ENCODE measurements at regions of chr19 and their contacts with region 1.

Region 1: DNA sequence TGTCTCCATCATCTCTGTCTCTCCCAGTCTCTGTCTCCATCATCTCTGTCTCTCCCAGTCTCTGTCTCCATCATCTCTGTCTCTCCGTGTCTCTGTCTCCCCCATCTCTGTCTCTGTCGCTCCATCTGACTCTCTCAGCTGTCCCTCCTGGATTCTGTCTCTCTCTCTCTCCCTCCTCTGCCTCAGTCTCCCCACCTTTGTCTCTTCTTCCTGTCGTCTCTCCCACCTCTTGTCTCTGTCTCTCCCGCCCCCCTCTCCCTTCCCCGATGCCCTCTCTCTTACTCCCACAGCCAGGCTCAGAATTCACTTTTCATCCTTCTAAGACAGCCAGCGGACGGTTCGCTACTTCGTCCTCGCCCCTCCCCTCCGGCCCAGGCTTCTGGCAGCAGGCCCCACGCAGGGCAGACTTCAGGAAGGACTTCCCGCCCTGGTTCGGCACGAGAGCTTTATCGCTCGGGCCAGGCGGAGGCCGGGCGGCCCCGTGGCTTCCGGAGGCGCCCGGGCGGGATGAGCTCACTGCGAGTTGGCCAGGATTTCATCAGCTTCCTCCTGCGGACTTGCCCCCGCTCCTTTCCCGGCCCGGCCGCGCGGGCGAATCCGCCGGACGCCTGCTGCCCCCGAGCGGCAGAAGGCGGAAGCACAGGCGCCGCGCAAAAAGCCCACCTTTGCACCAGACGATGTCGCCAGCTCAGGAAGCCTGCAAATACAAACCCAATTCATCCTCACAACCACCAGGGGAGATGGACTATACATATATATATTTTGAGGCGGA is 12.4 kb upstream of the CCDC9 start:
- DNase-seq: peak; percentile 80 to 88
- ATAC-seq: peak; percentile 88 to 92
- H3K4me3 ChIP-seq: peak overlapping the region; percentile 44 to 60 (median 51)
- H3K27ac ChIP-seq: peak overlapping the region; percentile 56 to 71 (median 68)
- H3K4me1 ChIP-seq: peaks cover 12 to 31% of the 10 kb centered on the region in 2 donors
- H3K27me3 ChIP-seq: peaks cover 30 to 36% (median 34%) of the 10 kb centered on the region in 3 donors
- CTCF ChIP-seq: peak; percentile 98 to 99 (median 99)
- POLR2A ChIP-seq: peak in 1 of 2 donors; percentile 39

Region 2: DNA sequence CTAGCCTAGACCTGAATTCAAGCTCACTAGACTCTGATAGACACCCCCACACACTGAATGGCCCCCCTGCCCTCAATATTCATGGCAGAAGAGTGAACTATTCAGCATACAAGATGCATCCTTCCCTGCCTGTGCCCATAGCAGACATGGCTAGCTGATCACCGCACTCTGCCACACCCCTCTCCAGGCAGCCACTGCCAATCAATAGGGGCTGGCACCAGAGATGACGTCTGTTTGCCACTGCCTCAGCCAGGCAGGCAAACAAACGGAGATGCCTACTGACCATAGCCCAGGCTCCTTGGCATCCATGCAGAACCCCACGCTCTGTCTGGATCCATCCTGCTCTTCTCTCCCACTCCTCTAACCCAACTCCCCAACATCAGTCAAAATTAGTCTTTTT is 238.1 kb before region 1 on chr19:
- in situ Hi-C with region 1: no loop called
- intact Hi-C with region 1: no loop called
- DNase-seq: no peak
- ATAC-seq: no peak
- H3K4me3 ChIP-seq: no peak overlapping the region
- H3K27ac ChIP-seq: no peak overlapping the region
- H3K4me1 ChIP-seq: peaks cover 4 to 6% of the 10 kb centered on the region in 2 donors
- H3K27me3 ChIP-seq: peaks cover 0 to 9% (median 7%) of the 10 kb centered on the region in 3 donors
- CTCF ChIP-seq: no peak
- POLR2A ChIP-seq: no peak

Region 3: GRCh38 chr19:47130591-47131227 is 113.3 kb before region 1 on chr19 and contains the start of gene SAE1:
- in situ Hi-C with region 1: loop called in 1 of 4 experiments (anchors 10 kb)
- intact Hi-C with region 1: loop called (anchors 5 kb)
- DNase-seq: peak; percentile 86 to 95
- ATAC-seq: peak; percentile 93 to 94
- H3K4me3 ChIP-seq: peak within 1 kb of the TSS; percentile 65 to 86 (median 84)
- H3K27ac ChIP-seq: peak within 1 kb of the TSS; percentile 80 to 88 (median 86)
- H3K4me1 ChIP-seq: peaks cover 0 to 4% of the 10 kb centered on the region in 2 donors
- H3K27me3 ChIP-seq: no peaks in the 10 kb centered on the region
- CTCF ChIP-seq: peak in 4 of 5 experiments; percentile 43 to 71 (median 60)
- POLR2A ChIP-seq: peak; percentile 50 to 65
- total RNA-seq, gene SAE1: 29.7 to 74.6 (median 46.4) TPM

Region 4: GRCh38 chr19:47143322-47144073 is 100.5 kb before region 1 on chr19:
- in situ Hi-C with region 1: loop called in 3 of 4 experiments (anchors 10 kb)
- intact Hi-C with region 1: no loop called
- DNase-seq: peak; percentile 7 to 20
- ATAC-seq: peak in 1 of 2 donors; percentile 61
- H3K4me3 ChIP-seq: no peak overlapping the region
- H3K27ac ChIP-seq: peak overlapping the region in 1 of 4 donors; percentile 5
- H3K4me1 ChIP-seq: peaks cover 8 to 10% of the 10 kb centered on the region in 2 donors
- H3K27me3 ChIP-seq: no peaks in the 10 kb centered on the region
- CTCF ChIP-seq: no peak
- POLR2A ChIP-seq: no peak

Region 5: DNA sequence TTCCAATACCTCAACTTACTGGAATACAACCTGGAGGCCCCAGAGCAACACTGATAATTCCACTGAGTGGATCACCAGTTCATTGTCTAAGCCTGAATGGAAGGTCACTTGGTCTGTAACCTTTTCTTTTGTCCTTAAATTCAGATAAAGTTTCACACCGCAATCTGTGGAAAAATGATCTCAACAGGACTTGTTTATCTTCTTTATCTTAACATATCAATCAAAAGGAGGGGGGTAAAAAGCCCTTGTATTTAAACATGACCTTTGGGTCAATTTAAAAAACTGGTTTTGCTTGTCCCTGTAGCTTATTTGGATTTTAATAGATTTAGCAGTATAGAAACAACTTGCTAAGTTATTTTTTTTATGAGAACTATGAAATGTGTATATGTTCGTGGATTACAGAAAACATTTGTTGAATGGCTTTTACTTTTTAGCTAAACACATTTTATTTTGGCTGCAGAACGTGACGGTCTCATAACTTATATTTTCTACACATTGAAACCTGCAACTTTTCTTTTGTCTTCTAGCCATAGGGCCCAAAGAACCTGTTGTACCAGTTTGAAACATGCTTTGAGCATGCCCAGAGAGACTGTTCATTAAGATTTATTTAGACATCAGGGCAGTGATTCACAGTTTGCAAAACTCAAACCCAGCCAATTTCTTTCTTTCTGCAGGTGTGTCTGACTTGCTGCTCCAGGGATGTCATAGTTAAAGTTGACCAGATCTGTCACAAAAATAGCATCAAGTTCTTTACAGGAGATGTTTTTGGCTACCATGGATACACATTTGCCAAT is 91.5 kb before region 1 on chr19:
- in situ Hi-C with region 1: loop called in 3 of 4 experiments (anchors 5 to 10 kb)
- intact Hi-C with region 1: no loop called
- DNase-seq: no peak
- ATAC-seq: no peak
- H3K4me3 ChIP-seq: no peak overlapping the region
- H3K27ac ChIP-seq: no peak overlapping the region
- H3K4me1 ChIP-seq: peaks cover 7 to 10% of the 10 kb centered on the region in 2 donors
- H3K27me3 ChIP-seq: no peaks in the 10 kb centered on the region
- CTCF ChIP-seq: no peak
- POLR2A ChIP-seq: no peak

Region 6: DNA sequence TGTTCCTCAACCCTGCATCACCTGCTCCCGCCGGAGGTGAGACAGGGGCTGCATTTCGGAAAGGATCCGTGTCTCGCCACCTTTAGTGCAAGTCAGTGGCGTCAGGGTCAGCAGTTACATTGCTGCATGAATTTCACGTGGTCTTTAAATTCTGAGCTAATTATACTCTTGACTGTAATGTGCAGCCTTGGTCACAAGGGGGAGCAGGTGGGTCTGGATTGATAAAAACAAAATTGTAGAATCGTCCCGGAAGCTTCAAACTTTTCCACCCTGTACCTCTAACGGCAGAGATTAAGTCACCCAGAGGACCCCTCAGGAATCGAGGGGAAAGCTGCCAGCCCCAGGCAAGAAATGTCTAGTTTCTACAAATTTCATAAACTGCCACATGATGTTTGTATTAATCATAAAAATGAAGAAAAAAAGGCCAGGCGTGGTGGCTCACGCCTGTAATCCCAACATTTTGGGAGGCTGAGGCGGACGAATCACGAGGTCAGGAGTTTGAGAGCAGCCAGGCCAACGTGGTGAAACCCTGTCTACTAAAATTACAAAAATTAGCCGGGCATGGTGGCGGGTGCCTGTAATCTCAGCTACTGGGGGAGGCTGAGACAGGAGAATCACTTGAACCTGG is 33.2 kb before region 1 on chr19:
- in situ Hi-C with region 1: loop called (anchors 5 kb)
- intact Hi-C with region 1: loop called (anchors 1 kb)
- DNase-seq: peak; percentile 63 to 81
- ATAC-seq: peak; percentile 94 to 95
- H3K4me3 ChIP-seq: no peak overlapping the region
- H3K27ac ChIP-seq: peak overlapping the region in 3 of 4 donors; percentile 48 to 71 (median 51)
- H3K4me1 ChIP-seq: peaks cover 4 to 6% of the 10 kb centered on the region in 2 donors
- H3K27me3 ChIP-seq: no peaks in the 10 kb centered on the region
- CTCF ChIP-seq: peak; percentile 81 to 93 (median 88)
- POLR2A ChIP-seq: no peak

Region 7: DNA sequence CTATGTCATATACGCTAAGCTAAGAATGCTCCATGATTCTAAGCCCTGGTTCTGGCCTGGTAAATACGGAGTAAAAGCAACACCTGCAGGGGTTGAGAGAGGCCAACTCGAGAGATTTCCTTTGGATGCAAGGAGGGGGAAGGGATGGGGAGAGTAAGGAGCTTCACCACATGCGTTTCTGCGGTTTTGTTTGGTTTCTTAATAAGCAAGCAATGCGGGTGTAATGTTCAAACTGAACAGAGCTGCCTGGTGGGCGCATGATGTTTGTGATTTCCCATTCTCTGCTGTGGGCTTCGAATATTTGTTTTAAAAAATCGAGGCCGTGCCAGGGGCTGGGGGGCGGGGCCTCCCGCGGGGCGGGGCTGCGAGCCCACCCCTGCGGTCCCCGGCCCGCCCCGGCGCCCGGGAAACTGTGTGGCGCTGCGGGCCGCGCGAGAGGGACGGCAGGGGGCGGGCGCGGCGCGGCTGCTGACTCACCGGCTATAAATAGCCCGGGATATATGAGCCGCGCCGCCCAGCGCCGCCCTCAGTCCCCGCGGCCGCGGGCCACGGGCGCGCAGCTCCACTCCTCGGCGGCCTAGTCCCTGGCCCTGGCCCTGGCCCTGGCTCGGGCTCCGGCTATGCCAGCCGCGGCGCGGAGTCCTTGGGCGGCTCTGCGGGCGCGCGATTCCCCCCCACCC is 18.1 kb before region 1 on chr19:
- in situ Hi-C with region 1: no loop called
- intact Hi-C with region 1: loop called (anchors 1 kb)
- DNase-seq: peak; percentile 70 to 87
- ATAC-seq: peak; percentile 43 to 54
- H3K4me3 ChIP-seq: peak overlapping the region; percentile 72 to 100 (median 86)
- H3K27ac ChIP-seq: peak overlapping the region; percentile 98 to 100 (median 100)
- H3K4me1 ChIP-seq: peaks cover 26% of the 10 kb centered on the region in 2 donors
- H3K27me3 ChIP-seq: no peaks in the 10 kb centered on the region
- CTCF ChIP-seq: peak; percentile 27 to 77 (median 61)
- POLR2A ChIP-seq: peak; percentile 100

Region 8: GRCh38 chr19:47231215-47231984 is 12.6 kb before region 1 on chr19:
- in situ Hi-C with region 1: no loop called
- intact Hi-C with region 1: loop called (anchors 1 kb)
- DNase-seq: peak; percentile 70 to 88
- ATAC-seq: peak; percentile 39 to 40
- H3K4me3 ChIP-seq: peak overlapping the region; percentile 47 to 100 (median 70)
- H3K27ac ChIP-seq: peak overlapping the region; percentile 80 to 100 (median 100)
- H3K4me1 ChIP-seq: peaks cover 21 to 24% of the 10 kb centered on the region in 2 donors
- H3K27me3 ChIP-seq: no peaks in the 10 kb centered on the region
- CTCF ChIP-seq: no peak
- POLR2A ChIP-seq: no peak

Region 9: DNA sequence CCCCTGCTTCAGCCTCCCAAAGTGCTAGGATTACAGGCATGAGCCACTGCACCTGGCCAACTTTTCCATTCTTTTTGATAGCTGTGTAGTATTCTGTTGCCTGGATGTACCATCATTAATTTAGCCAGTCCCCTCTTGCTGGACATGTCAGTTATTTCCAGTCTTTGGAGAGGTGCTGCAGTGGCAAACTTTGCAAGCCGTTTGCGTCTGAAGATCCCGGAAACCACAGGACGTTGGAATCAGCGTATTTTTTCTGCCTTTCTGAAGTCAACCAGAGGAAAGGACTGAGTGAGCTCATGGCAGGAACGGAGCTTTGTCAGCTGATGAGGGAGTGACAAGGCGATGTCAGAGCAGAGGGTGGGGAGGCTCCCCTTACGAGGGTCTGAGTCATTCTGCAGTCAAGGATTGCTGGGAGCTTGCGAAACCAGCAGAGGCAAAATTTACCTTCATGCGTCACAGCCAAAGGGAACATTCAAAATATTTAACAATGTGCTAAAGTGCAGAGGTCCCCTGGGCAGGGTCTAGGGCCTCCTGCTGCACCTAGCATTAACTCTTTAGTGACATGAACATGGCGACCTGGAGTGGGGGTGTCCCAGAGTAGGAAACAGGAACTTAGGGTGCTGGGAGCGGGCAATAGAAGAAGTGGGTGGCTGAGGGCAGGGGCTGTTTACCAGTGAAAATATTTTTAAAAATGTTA is 71.3 kb after region 1 on chr19:
- in situ Hi-C with region 1: no loop called
- intact Hi-C with region 1: no loop called
- DNase-seq: peak; percentile 61 to 67
- ATAC-seq: peak; percentile 69 to 86
- H3K4me3 ChIP-seq: no peak overlapping the region
- H3K27ac ChIP-seq: peak overlapping the region in 1 of 4 donors; percentile 15
- H3K4me1 ChIP-seq: no peaks in the 10 kb centered on the region
- H3K27me3 ChIP-seq: peaks cover 9 to 31% (median 27%) of the 10 kb centered on the region in 3 donors
- CTCF ChIP-seq: no peak
- POLR2A ChIP-seq: peak in 1 of 2 donors; percentile 9

Region 10: DNA sequence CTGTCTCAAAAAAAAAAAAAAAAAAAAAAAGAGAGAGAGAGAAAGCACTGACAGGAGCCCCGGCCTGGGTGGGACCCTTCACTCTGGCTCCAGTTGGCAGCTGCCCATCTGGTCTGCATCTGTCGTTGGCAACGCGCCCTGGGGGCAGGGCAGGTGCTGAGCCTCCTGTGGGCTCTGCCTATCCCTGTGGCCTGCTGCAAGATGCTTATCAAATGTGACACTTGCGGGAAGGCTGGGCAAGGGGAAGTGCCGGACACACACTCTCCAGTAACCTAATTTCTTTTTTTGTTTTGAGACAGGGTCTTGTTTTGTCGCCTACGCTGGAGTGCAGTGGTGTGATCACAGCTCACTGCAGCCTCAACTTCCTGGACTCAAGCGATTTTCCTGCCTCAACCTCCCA is 250.8 kb after region 1 on chr19:
- in situ Hi-C with region 1: no loop called
- intact Hi-C with region 1: no loop called
- DNase-seq: no peak
- ATAC-seq: no peak
- H3K4me3 ChIP-seq: no peak overlapping the region
- H3K27ac ChIP-seq: no peak overlapping the region
- H3K4me1 ChIP-seq: peaks cover 14 to 29% of the 10 kb centered on the region in 2 donors
- H3K27me3 ChIP-seq: no peaks in the 10 kb centered on the region
- CTCF ChIP-seq: no peak
- POLR2A ChIP-seq: no peak